ENCODE measurements at regions of chr5 and their contacts with region 1.

Region 1: GRCh38 chr5:139787568-139788293 is 7.9 kb upstream of the PSD2 start:
- DNase-seq: peak; percentile 88
- ATAC-seq: peak; percentile 94
- H3K4me3 Mint-ChIP-seq: peak overlapping the region; percentile 76
- H3K27ac Mint-ChIP-seq: no peak overlapping the region
- H3K4me1 Mint-ChIP-seq: peaks cover 4% of the 10 kb centered on the region
- H3K27me3 Mint-ChIP-seq: peaks cover 19% of the 10 kb centered on the region

Region 2: DNA sequence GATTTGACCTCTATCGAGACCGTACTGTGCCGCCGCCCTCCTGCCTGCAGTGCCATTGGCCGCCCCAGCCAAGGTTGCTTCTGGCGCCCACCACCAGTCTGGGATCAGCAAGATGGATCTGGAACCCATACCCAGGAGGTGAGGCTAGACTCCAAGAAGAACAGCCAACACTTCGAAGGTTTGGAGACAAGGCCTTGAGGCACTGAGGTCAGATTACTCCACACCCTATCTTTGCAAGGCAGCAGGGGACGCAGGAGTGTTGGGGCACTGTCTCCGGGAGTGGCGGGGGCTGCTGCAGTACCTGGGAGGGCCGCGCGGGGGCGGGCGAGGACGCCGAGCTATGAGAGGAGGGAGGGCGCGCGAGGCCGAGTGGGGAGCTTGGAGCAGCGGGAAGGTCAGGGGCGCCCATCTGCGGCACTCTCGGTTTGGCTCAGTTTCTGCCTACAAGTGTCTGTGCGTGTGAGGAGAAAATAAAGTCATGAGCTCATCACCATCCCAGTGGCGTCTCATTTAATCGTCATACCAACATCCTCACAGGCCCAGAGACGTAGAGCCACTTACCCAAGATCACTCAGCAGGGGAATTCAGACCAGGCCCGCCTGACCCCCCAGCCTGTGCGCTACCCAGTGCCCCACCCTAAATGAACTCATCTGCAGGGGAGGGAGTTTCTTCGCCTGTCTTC is 12.6 kb before region 1 on chr5:
- CTCF ChIA-PET with region 1: interaction called, 56 read pairs
- POLR2A ChIA-PET with region 1: no interaction called
- DNase-seq: peak; percentile 85
- ATAC-seq: peak; percentile 97
- H3K4me3 Mint-ChIP-seq: no peak overlapping the region
- H3K27ac Mint-ChIP-seq: no peak overlapping the region
- H3K4me1 Mint-ChIP-seq: peaks cover 4% of the 10 kb centered on the region
- H3K27me3 Mint-ChIP-seq: peaks cover 15% of the 10 kb centered on the region

Region 3: DNA sequence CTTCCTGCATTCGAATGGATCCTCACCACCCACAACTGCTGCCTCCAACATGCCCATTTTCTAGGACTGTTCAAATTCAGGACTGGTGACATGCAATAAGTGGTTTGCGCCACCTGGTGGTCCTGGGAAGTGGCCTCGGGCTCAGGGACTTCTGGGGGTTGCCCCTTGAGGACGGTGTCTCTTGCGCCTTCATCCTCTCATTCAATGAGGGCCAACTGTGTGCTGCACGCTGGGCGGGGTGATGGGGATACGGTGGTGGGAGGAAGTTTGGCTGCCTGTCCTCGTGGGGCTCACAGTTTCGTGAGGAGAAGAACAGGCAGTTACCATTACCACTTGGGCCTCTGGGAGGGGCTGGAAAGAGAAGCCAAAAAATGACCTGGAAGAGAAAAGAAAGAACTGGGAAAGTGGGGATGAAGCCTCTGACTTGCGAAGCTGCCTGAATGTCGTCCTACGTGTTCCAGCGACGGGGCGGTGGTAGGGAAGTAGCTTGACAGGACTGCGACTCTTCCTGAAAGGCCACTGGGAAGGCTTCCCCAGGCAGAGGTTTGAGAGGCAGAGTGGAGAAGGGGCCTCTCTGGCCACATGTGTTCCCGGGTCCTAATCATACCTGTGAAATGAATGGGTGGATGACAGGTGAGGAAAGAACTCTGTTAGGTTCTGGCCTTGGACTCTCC is 56.9 kb after region 1 on chr5:
- CTCF ChIA-PET with region 1: interaction called, 28 read pairs
- POLR2A ChIA-PET with region 1: no interaction called
- DNase-seq: peak; percentile 81
- ATAC-seq: peak; percentile 29
- H3K4me3 Mint-ChIP-seq: no peak overlapping the region
- H3K27ac Mint-ChIP-seq: no peak overlapping the region
- H3K4me1 Mint-ChIP-seq: peaks cover 6% of the 10 kb centered on the region
- H3K27me3 Mint-ChIP-seq: peaks cover 34% of the 10 kb centered on the region

Region 4: GRCh38 chr5:139863855-139864558 is 76.3 kb after region 1 on chr5:
- CTCF ChIA-PET with region 1: interaction called, 17 read pairs
- POLR2A ChIA-PET with region 1: no interaction called
- DNase-seq: peak; percentile 67
- ATAC-seq: peak; percentile 68
- H3K4me3 Mint-ChIP-seq: no peak overlapping the region
- H3K27ac Mint-ChIP-seq: no peak overlapping the region
- H3K4me1 Mint-ChIP-seq: no peaks in the 10 kb centered on the region
- H3K27me3 Mint-ChIP-seq: peaks cover 4% of the 10 kb centered on the region

Region 5: DNA sequence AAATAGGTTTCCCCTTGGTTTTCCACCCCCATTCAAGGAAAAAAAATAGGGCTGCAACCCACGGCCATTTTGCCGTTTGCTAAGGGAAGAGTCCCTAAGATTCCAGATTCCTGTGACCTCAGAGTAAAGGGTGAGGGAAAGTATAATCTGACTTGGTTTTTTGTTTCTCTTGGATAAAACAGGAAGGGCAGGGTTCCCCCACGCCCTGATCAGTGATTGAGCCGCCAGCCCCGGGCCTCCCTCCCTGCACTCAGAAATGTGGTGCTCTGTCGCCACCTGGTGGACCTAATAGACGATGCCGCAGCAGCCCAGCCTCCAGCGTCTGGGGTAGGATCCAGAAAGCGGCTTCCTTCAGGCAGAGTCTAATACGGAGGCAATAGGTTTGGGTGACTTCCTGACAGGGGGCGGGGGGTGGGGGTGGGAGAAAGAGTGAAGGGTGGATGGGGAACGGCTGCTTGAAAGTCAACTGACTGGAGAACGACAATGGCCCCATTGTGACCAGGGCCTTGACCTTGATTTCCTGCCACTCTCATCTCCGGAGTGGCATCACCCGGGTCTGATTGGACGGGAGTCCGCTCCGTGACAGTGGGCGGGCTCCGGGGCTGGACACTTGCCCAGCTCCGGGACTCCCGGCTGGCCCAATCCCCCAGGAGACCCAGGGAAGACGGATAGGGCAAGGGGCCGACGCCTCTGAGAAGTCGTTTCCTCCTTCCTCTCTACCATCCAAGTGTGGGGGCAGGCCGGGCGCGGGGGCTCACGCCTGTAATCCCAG is 369.5 kb after region 1 on chr5:
- CTCF ChIA-PET with region 1: interaction called, 11 read pairs
- POLR2A ChIA-PET with region 1: no interaction called
- DNase-seq: peak; percentile 90
- ATAC-seq: peak; percentile 98
- H3K4me3 Mint-ChIP-seq: peak overlapping the region; percentile 34
- H3K27ac Mint-ChIP-seq: peak overlapping the region; percentile 49
- H3K4me1 Mint-ChIP-seq: peaks cover 9% of the 10 kb centered on the region
- H3K27me3 Mint-ChIP-seq: peaks cover 6% of the 10 kb centered on the region